Esophagus muscularis mucosa (tissue), 4 donors: ENCODE measurements at regions of chr17 and their contacts with region 1.

Region 1: GRCh38 chr17:60435244-60436167 is 13.2 kb downstream of the CHCT1 start:
- DNase-seq: no peak
- H3K4me3 ChIP-seq: peak overlapping the region in 2 of 4 donors; percentile 4 to 29
- H3K27ac ChIP-seq: peak overlapping the region in 3 of 4 donors; percentile 1 to 45 (median 23)
- H3K4me1 ChIP-seq: peaks cover 0 to 17% (median 14%) of the 10 kb centered on the region in 4 donors
- H3K27me3 ChIP-seq: no peaks in the 10 kb centered on the region
- CTCF ChIP-seq: peak; percentile 90 to 95 (median 91)
- EP300 ChIP-seq: no peak
- POLR2A ChIP-seq: no peak

Region 2: GRCh38 chr17:60102632-60103096 is 332.8 kb before region 1 on chr17:
- intact Hi-C with region 1: loop called (anchors 10 kb)
- DNase-seq: no peak
- H3K4me3 ChIP-seq: peak overlapping the region; percentile 25 to 45 (median 36)
- H3K27ac ChIP-seq: peak overlapping the region in 2 of 4 donors; percentile 25 to 33
- H3K4me1 ChIP-seq: peaks cover 0 to 12% (median 5%) of the 10 kb centered on the region in 4 donors
- H3K27me3 ChIP-seq: no peaks in the 10 kb centered on the region
- CTCF ChIP-seq: no peak
- EP300 ChIP-seq: no peak
- POLR2A ChIP-seq: no peak

Region 3: GRCh38 chr17:60135151-60135950 is 300.2 kb before region 1 on chr17:
- intact Hi-C with region 1: loop called (anchors 5 kb)
- DNase-seq: peak; percentile 96
- H3K4me3 ChIP-seq: peak overlapping the region; percentile 61 to 90 (median 68)
- H3K27ac ChIP-seq: peak overlapping the region; percentile 63 to 81 (median 75)
- H3K4me1 ChIP-seq: peaks cover 32 to 47% (median 39%) of the 10 kb centered on the region in 4 donors
- H3K27me3 ChIP-seq: peaks cover 0 to 35% (median 20%) of the 10 kb centered on the region in 4 donors
- CTCF ChIP-seq: peak in 1 of 3 experiments; percentile 22
- EP300 ChIP-seq: no peak
- POLR2A ChIP-seq: no peak

Region 4: GRCh38 chr17:60231234-60231633 is 204.3 kb before region 1 on chr17:
- intact Hi-C with region 1: loop called (anchors 5 kb)
- DNase-seq: no peak
- H3K4me3 ChIP-seq: no peak overlapping the region
- H3K27ac ChIP-seq: no peak overlapping the region
- H3K4me1 ChIP-seq: no peaks in the 10 kb centered on the region
- H3K27me3 ChIP-seq: no peaks in the 10 kb centered on the region
- CTCF ChIP-seq: peak in 2 of 3 experiments; percentile 24 to 40
- EP300 ChIP-seq: no peak
- POLR2A ChIP-seq: no peak